CD4-positive, alpha-beta memory T cell (primary cell): ENCODE measurements at regions of chrX and their contacts with region 1.

Region 1: GRCh38 chrX:48945516-48946348 is 11.7 kb downstream of the OTUD5 start:
- DNase-seq: peak; percentile 45 to 66 (median 62)
- H3K4me3 ChIP-seq: no peak overlapping the region
- H3K4me3 Mint-ChIP-seq: peak overlapping the region in 6 of 8 donors; percentile 11 to 64 (median 26)
- H3K27ac ChIP-seq: no peak overlapping the region
- H3K27ac Mint-ChIP-seq: peak overlapping the region; percentile 66 to 92 (median 79)
- H3K4me1 ChIP-seq: peaks cover 70% of the 10 kb centered on the region
- H3K4me1 Mint-ChIP-seq: peaks cover 34 to 63% (median 48%) of the 10 kb centered on the region in 4 donors
- H3K27me3 ChIP-seq: no peaks in the 10 kb centered on the region
- H3K27me3 Mint-ChIP-seq: no peaks in the 10 kb centered on the region

Region 2: GRCh38 chrX:48891402-48892288 is 54.1 kb before region 1 on chrX:
- CTCF ChIA-PET with region 1: interaction called, 35 read pairs
- POLR2A ChIA-PET with region 1: interaction called, 46 read pairs
- intact Hi-C with region 1: loop called (anchors 1 kb)
- DNase-seq: peak; percentile 76 to 85 (median 78)
- H3K4me3 ChIP-seq: peak overlapping the region in 1 of 2 donors; percentile 49
- H3K4me3 Mint-ChIP-seq: peak overlapping the region; percentile 75 to 97 (median 82)
- H3K27ac ChIP-seq: peak overlapping the region; percentile 52
- H3K27ac Mint-ChIP-seq: peak overlapping the region in 6 of 7 donors; percentile 37 to 90 (median 74)
- H3K4me1 ChIP-seq: peaks cover 15% of the 10 kb centered on the region
- H3K4me1 Mint-ChIP-seq: peaks cover 10 to 30% (median 21%) of the 10 kb centered on the region in 4 donors
- H3K27me3 ChIP-seq: no peaks in the 10 kb centered on the region
- H3K27me3 Mint-ChIP-seq: peaks cover 0 to 1% of the 10 kb centered on the region in 2 donors